Psoas muscle (tissue), 8 donors: ENCODE measurements at regions of chr1 and their contacts with region 1.

Region 1: DNA sequence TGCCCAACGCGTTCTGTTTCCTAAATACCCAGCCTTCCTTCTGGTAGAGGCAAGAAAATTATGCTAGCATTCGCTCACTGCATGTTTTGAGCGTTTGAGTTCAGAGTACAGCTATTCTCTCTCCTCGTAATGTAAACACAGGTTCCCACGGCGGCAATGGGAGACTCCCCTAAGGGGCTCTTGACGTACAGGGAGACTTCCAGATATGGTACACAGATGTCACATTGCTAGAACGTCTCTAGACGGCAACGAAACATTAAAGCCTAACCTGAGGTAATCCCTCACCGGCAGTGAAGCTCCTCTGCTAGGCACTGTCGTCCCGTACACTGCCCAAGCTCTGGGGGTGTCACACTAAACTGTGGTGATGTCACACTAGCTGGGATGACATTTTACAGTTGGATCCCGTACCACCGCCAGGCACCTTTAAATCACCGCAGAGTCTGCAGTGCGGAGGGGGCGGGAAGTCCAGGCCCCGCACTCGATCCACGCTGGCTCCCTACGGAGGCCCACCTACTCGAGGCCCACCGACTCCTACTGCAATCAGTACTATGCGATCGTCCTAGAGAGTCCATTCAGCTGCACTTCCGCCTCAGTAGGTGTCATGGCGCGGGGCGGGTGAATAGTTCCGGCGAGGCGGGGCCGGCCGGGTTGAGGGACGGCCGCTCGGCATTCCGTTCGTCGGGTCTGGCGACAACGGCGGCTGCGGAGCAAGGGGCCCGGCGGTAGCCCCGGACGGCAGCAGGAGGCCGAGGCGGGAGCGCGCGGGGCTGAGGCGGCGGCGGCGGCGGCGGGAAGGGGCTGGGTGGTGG is at the start of gene HIPK1:
- DNase-seq: peak; percentile 95 to 96
- ATAC-seq: peak; percentile 91 to 94 (median 94)
- H3K4me3 ChIP-seq: peak within 1 kb of the TSS; percentile 86
- H3K27ac ChIP-seq: peak within 1 kb of the TSS; percentile 96
- H3K4me1 ChIP-seq: peaks cover 45% of the 10 kb centered on the region
- H3K27me3 ChIP-seq: no peaks in the 10 kb centered on the region
- CTCF ChIP-seq: no peak
- total RNA-seq, gene HIPK1: 56.0 to 80.6 (median 65.3) TPM

Region 2: GRCh38 chr1:113811888-113812660 is 117.1 kb before region 1 on chr1 and contains the start of gene RSBN1:
- intact Hi-C with region 1: loop called in 1 of 2 experiments (anchors 1 kb)
- DNase-seq: peak; percentile 99
- ATAC-seq: peak; percentile 94 to 98 (median 96)
- H3K4me3 ChIP-seq: peak within 1 kb of the TSS; percentile 82
- H3K27ac ChIP-seq: peak within 1 kb of the TSS; percentile 96
- H3K4me1 ChIP-seq: peaks cover 26% of the 10 kb centered on the region
- H3K27me3 ChIP-seq: no peaks in the 10 kb centered on the region
- CTCF ChIP-seq: no peak
- total RNA-seq, gene RSBN1: 11.0 to 20.8 (median 12.7) TPM

Region 3: GRCh38 chr1:113859478-113860175 is 69.5 kb before region 1 on chr1:
- intact Hi-C with region 1: no loop called
- DNase-seq: no peak
- ATAC-seq: no peak
- H3K4me3 ChIP-seq: no peak overlapping the region
- H3K27ac ChIP-seq: no peak overlapping the region
- H3K4me1 ChIP-seq: no peaks in the 10 kb centered on the region
- H3K27me3 ChIP-seq: no peaks in the 10 kb centered on the region
- CTCF ChIP-seq: no peak

Region 4: GRCh38 chr1:113904674-113905434 is 24.3 kb before region 1 on chr1 and contains the starts of genes AP4B1 and DCLRE1B:
- intact Hi-C with region 1: loop called (anchors 1 kb)
- DNase-seq: peak; percentile 99 to 100
- ATAC-seq: peak; percentile 95 to 97 (median 96)
- H3K4me3 ChIP-seq: peak within 1 kb of the TSS; percentile 91
- H3K27ac ChIP-seq: peak within 1 kb of the TSS; percentile 89
- H3K4me1 ChIP-seq: peaks cover 9% of the 10 kb centered on the region
- H3K27me3 ChIP-seq: no peaks in the 10 kb centered on the region
- CTCF ChIP-seq: peak; percentile 70
- total RNA-seq, gene AP4B1: 6.8 to 12.0 (median 9.3) TPM
- total RNA-seq, gene DCLRE1B: 1.8 to 2.3 (median 2.1) TPM

Region 5: GRCh38 chr1:113912594-113913311 is 16.4 kb before region 1 on chr1:
- intact Hi-C with region 1: loop called in 1 of 2 experiments (anchors 2 kb)
- DNase-seq: peak; percentile 26 to 69
- ATAC-seq: peak; percentile 88 to 99 (median 94)
- H3K4me3 ChIP-seq: peak overlapping the region; percentile 20
- H3K27ac ChIP-seq: peak overlapping the region; percentile 73
- H3K4me1 ChIP-seq: peaks cover 19% of the 10 kb centered on the region
- H3K27me3 ChIP-seq: no peaks in the 10 kb centered on the region
- CTCF ChIP-seq: no peak